ENCODE measurements at regions of chr6 and their contacts with region 1.

Region 1: DNA sequence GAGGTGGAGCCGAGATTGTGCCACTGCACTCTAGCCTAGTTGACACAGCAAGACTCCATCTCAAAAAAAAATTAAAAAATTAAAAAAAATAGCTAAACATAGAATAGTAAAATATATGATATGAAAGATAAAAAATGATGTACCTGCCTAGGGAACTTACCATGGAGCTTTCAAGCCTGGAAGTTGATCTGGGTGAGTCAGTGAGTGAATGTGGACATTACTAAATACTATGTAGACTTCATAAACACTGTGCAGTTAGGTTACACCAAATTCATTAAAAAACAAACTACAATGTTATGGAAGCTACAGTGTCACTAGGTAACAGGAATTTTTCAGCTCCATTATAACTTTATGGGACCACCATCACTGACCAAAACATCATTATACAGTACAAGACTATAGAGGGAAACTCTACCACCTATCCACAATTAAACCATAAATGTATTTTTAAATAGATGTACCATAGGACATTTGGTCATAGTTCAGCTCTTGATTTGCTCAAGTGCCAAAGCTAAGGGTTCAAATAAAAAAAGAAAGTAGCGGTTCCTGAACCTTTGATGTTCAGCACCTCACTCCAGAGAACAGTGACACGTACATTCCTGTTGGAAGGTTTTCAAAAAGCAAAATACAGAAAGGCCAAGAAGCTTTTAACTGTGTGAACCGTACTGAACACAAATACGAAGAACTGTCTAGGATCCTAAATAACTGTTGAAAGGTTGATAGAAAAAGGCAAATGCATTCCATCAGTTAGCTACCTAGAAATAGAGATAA is 52.4 kb upstream of the SPDEF start:
- DNase-seq: no peak
- H3K4me3 ChIP-seq: no peak overlapping the region
- H3K27ac ChIP-seq: peak overlapping the region in 34 of 59 donors; percentile 0 to 81 (median 46)
- H3K27me3 ChIP-seq: no peaks in the 10 kb centered on the region
- CTCF ChIP-seq: no peak

Region 2: GRCh38 chr6:34161857-34162515 is 446.5 kb before region 1 on chr6:
- intact Hi-C with region 1: loop called in 1 of 2 experiments (anchors 2 kb)
- DNase-seq: peak in 3 of 10 donors; percentile 11 to 18 (median 15)
- H3K4me3 ChIP-seq: no peak overlapping the region
- H3K27ac ChIP-seq: no peak overlapping the region
- H3K27me3 ChIP-seq: no peaks in the 10 kb centered on the region
- CTCF ChIP-seq: no peak

Region 3: GRCh38 chr6:34459899-34460593 is 148.5 kb before region 1 on chr6:
- intact Hi-C with region 1: loop called (anchors 5 kb)
- DNase-seq: peak in 3 of 10 donors; percentile 16 to 51 (median 33)
- H3K4me3 ChIP-seq: no peak overlapping the region
- H3K27ac ChIP-seq: no peak overlapping the region
- H3K27me3 ChIP-seq: peaks cover 0 to 2% (median 0%) of the 10 kb centered on the region in 45 donors
- CTCF ChIP-seq: peak; percentile 40 to 73 (median 64)

Region 4: DNA sequence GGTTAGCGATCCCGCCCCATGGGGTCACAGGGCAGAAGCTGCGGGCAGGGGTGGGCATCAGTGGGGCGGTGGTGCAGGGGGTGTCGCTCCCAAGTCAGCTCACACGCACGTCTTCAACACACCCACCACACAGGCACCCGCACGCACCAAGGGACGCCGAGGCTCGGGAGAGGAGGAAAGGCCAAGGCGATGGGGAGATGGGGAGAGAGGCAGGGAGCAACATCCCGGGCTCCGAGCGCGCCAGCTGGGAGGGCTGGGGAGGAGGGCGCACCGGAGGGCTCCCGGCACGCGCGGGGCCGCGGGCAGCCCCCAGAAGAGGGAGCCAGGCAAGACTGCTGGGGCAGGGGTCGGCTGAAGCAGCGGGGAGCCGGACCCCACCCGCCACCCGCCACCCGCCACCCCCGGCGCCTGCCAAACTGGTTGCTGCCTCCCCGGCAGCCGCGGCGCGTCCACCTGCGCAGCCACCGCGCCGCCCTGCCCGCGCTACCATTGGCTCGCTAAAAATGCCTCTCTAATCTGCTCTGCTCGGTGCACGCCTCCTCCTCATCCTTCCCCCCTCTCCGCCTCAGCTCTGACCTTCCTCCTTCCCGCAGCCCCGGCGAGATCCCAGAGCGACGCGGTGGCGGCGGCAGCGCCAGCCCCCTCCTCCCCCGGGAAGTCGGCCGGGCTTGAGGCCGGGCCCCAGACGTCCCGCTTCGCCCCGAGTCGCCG is 142.8 kb before region 1 on chr6 and contains the start of gene PACSIN1:
- intact Hi-C with region 1: loop called in 1 of 2 experiments (anchors 5 kb)
- DNase-seq: peak in 9 of 10 donors; percentile 26 to 87 (median 73)
- H3K4me3 ChIP-seq: peak within 1 kb of the TSS; percentile 21 to 77 (median 63)
- H3K27ac ChIP-seq: peak within 1 kb of the TSS in 56 of 59 donors; percentile 2 to 92 (median 79)
- H3K27me3 ChIP-seq: peaks cover 0 to 20% (median 4%) of the 10 kb centered on the region in 45 donors
- CTCF ChIP-seq: no peak
- total RNA-seq, gene PACSIN1: 78.5 to 489 (median 335) TPM

Region 5: DNA sequence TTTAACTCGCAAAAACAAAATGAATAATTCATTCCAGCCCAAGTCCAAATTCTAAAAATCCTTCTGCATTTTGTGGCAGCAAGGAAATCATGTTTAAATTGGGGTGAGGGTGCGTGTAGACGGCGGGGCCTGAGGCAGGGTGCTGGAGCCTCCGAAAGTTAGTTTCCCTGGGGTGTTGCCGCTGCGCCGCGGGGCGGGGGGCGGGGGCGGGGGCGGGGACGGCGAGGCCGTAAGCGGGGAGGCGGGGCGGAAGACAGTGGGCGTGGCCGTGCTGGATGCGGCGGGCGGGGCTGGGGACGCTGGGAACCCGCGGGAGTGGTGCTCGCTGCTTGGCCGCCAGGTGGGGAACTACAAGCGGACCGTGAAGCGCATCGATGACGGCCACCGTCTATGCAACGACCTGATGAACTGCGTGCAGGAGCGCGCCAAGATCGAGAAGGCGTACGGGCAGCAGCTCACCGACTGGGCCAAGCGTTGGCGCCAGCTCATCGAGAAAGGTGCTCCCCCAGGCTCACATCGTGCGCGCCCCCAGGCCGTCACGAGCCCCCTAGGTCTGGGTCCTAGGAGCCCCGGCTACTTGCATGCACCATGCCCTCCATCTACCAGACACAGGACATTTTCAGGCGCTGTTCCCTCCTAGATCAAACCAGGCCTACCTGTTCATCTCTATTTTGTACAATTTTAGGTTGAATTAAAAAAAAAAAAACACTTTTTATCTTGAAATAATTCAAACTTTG is 81.3 kb before region 1 on chr6:
- intact Hi-C with region 1: loop called (anchors 2 to 5 kb)
- DNase-seq: peak; percentile 86 to 97 (median 90)
- H3K4me3 ChIP-seq: peak overlapping the region in 58 of 59 donors; percentile 8 to 62 (median 46)
- H3K27ac ChIP-seq: peak overlapping the region in 38 of 59 donors; percentile 1 to 71 (median 42)
- H3K27me3 ChIP-seq: no peaks in the 10 kb centered on the region
- CTCF ChIP-seq: peak in 54 of 56 donors; percentile 53 to 84 (median 72)

Region 6: DNA sequence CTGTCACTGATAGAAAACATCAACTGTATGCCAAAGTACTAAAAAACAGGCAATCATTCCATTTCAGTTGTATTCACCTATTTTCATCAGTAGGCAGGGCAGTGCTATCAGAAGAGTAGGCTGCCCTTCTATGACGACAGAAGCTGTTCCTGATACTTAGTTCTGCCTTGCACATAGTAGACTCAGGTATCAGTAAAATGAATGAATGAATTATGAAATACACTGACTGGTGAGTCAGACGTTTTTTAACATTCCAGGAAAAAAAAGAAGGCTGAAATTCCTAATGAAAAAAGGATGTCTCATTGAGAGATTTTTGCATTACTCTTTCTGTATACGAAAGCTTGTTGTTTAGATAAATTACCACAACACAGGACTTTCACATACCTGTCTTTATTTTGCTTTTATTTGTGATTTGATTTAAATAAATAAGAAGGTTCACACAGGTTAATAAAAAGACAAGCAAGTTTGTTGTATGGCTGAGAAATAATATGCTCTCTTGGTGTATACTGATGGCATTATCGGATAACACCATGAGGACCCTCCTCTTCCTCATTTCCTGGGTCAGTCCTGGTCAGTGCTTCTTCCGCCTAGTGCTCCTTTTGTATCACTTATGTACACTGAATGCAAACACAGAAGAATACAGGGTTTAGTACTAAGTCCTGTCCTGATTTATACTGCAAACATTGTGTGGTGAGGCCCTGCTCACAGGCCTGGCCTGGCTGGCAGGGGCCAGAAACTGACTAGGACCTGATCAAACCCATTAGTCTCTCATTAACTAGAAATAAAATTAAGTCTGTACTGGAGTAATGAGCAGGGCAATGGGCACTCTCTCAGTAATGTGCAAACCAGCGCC is 12.9 kb before region 1 on chr6:
- intact Hi-C with region 1: no loop called
- DNase-seq: no peak
- H3K4me3 ChIP-seq: no peak overlapping the region
- H3K27ac ChIP-seq: peak overlapping the region in 9 of 59 donors; percentile 1 to 94 (median 19)
- H3K27me3 ChIP-seq: no peaks in the 10 kb centered on the region
- CTCF ChIP-seq: no peak

Measured in dorsolateral prefrontal cortex (tissue), 120 donors.